Dorsolateral prefrontal cortex (tissue), 120 donors: ENCODE measurements at regions of chr2 and their contacts with region 1.

Region 1: GRCh38 chr2:205947621-205948495 is 138.1 kb downstream of the INO80D start:
- DNase-seq: peak in 9 of 10 donors; percentile 39 to 71 (median 61)
- H3K4me3 ChIP-seq: peak overlapping the region in 12 of 59 donors; percentile 1 to 46 (median 16)
- H3K27ac ChIP-seq: no peak overlapping the region
- H3K27me3 ChIP-seq: peaks cover 0 to 6% (median 0%) of the 10 kb centered on the region in 45 donors
- CTCF ChIP-seq: peak; percentile 84 to 97 (median 93)

Region 2: DNA sequence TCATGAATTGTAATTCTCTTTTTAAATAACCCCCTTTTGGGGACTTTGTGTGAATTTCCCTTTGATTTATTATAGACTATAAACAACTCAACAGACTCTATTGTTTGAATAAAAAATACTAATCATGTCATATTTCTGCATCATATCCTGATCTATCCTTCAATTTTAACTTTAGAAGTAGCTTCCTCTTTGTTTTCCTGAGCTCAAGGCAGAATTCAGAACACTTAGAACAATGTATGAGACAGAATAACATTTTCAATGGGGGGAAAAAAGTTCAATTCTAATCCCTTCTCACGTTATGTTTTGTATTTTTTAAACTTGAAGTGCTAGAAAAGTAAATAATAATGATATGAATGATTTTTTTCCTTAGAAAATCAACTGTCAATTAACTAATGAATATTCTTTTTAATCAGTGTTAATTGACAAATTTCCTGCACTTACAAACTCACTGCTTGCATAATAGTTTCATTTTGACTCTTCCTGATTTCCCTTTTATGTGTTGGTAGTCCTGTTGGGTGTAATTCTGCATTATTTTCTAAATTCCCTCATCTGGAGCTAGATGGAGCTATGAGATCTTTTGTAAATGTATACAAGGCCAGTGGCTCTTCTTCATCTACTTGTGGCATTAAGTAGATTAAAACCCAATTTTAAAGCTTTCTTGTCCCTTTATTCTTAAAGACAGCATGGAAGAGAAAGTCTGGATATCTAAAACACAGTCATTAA is 1076.5 kb before region 1 on chr2:
- intact Hi-C with region 1: loop called in 1 of 2 experiments (anchors 5 kb)
- DNase-seq: no peak
- H3K4me3 ChIP-seq: no peak overlapping the region
- H3K27ac ChIP-seq: no peak overlapping the region
- H3K27me3 ChIP-seq: no peaks in the 10 kb centered on the region
- CTCF ChIP-seq: peak; percentile 13 to 80 (median 60)